Right ventricle myocardium inferior (tissue), 1 donor: ENCODE measurements at regions of chr1 and their contacts with region 1.

Region 1: GRCh38 chr1:178093205-178093957 is 523 bp upstream of the RASAL2 start:
- DNase-seq: peak; percentile 94
- ATAC-seq: peak; percentile 92

Region 2: GRCh38 chr1:177615282-177615681 is 478.1 kb before region 1 on chr1:
- intact Hi-C with region 1: no loop called
- DNase-seq: no peak
- ATAC-seq: no peak

Region 3: DNA sequence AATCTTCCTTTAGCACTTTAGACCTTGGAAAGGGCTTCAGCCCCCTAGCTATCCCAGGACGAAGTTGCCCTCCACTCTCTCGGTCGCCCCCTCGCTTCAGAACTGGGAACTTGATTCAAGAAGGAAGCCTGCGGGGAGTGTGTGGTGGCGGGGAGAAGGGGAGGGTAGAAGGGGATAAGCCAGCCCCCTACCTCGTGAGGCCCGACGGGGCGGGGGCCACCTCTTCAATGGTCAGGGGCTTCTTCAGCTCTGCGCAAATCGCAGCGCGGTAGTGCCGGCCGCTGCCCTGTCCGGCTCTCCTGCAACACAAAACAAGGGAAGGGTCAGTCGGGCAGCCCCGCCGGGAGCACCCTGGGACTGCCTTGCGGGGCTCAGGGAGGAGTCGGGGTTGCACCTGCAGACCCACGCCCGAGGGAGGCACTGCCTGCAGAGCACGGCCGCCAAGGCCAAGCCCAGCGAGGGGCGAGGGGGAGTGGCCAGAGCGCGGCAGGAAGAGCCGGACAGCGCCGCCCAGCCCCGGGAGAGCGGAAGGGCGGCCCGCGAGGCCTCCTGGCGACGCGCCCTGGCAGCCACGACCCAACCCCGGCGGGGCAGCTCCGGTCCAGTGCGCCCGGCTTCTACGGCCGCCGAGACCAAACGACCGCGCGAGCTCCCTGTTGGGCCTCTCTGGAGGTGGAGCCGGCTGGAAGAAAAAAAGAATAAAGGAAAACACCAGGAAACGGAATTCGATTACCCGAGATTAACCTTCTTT is 55.7 kb before region 1 on chr1:
- intact Hi-C with region 1: loop called (anchors 2 kb)
- DNase-seq: peak; percentile 94
- ATAC-seq: peak; percentile 97

Region 4: GRCh38 chr1:178055779-178056471 is 37.5 kb before region 1 on chr1:
- intact Hi-C with region 1: loop called (anchors 1 kb)
- DNase-seq: no peak
- ATAC-seq: peak; percentile 59

Region 5: DNA sequence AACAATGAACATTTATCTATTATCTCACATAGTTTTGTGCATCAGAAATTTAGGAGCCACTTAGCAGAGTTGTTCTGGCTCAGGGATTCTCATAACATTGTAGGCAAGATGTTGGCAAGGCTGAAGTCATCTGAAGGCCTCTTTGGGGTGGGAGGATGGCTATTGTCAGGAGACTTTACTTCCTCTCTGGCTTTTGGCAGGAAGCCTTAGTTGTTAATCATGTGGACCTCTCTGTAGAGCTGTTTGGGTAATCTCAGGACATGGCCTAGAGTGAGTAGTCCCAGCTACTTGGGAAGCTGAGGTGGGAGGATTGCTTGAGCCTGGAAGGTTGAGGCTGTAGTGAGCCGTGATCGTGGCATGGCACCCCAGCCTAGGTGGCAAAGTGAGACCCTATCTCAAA is 40.7 kb after region 1 on chr1:
- intact Hi-C with region 1: loop called (anchors 5 kb)
- DNase-seq: no peak
- ATAC-seq: peak; percentile 86

Region 6: DNA sequence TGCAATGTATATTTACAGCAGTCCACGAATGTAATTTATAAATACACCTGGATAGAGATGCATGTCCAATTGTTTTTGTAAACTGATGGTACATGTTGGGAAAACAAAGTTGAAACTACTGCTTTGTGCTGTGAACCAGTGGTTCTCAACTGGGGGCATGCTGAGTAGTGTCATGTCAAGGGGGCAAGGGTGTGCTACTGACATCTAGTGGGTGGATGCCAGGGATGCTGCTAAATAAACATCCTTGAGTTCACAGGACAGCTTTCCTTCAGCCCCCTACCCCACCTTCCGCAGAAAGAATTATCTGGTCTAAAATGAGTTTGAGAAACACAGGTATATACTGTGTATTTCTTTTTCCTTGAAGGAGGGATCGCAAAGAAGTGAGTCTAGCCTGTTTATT is 96.4 kb after region 1 on chr1:
- intact Hi-C with region 1: loop called (anchors 2 kb)
- DNase-seq: no peak
- ATAC-seq: peak; percentile 79

Region 7: GRCh38 chr1:178262120-178262500 is 168.7 kb after region 1 on chr1:
- intact Hi-C with region 1: no loop called
- DNase-seq: no peak
- ATAC-seq: no peak

Region 8: DNA sequence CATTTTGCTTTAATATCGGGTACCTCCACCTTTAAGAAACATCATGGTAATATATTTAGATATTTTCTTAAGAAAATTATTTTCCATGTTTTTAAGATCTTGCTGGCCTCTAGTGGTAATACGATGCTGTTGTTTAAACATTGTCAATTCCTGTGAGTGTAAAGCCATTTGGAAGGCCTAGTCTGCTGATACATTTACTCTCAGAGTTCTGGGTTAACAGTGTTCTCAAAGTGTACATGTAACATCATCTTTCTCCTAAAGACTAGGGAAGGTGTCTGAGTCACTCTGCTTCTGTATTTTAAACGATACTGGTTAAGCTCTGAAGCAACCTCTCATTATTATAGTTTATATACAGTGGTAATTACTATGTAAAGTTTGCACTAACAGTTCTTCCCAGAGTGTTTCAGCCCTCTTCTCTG is 189.6 kb after region 1 on chr1:
- intact Hi-C with region 1: loop called (anchors 5 kb)
- DNase-seq: no peak
- ATAC-seq: no peak